PC-9 (cell line): ENCODE measurements at regions of chr2 and their contacts with region 1.

Region 1: DNA sequence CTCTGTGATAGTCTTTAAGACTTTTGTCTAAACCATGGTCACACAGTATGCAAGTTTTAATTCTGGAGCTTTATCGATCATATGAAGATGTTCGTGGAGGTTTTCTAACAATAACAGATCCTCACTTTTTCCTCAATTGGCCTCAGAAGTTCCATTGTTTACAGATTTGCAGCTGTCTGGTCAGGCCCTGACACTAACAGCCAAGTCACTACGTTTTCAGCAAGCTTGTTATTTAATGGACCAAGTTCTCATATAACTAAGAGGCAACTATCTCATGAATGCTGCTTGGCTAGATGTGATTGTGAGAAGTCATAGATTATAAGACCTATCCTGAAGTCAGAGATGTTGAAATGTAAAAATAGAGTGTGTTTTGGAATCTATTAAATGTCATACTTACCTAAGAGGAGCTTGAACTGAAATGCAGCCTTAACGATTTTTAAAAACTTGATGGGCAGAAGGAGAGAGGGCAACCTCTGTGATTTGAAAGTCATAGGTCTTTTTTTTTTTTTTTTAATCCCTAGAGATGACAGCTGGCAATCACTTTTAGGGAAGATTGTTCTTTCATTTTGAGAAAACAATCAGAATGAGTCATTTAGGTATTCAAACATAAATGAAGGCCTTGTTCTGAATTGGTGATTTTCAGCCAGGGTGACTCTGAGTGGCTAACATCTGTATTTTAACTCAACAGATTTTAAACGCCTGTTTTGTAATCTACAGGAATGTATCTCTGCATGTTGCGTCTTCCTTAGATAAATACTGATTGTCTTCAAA is 48.4 kb upstream of the NEMP2 start:
- DNase-seq: no peak
- H3K4me3 ChIP-seq: no peak overlapping the region
- H3K27ac ChIP-seq: no peak overlapping the region
- H3K4me1 ChIP-seq: peaks cover 6% of the 10 kb centered on the region; the same call in 1 of the 2 replicates
- H3K27me3 ChIP-seq: no peaks in the 10 kb centered on the region
- CTCF ChIP-seq: no peak

Region 2: DNA sequence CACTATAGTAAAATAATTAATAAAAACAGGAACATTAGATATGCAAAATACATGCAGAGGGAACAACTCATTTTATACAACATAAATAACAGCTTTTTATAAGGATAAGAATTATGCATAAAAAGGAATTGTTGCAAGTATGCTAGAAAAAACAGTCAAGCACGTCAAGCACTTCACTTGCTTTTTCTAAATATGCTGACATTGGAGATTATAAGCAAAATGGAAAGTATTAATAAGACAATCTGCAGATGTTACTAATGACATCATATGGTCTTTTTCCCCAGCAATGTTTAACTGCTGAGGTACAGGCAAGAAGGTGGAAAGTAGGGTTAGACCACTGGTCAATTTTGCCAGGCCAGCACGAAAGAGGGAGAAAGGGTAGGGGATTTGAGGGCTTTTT is 375.0 kb before region 1 on chr2:
- CTCF ChIA-PET with region 1: no interaction called
- POLR2A ChIA-PET with region 1: interaction called, 20 read pairs
- intact Hi-C with region 1: no loop called
- DNase-seq: no peak
- H3K4me3 ChIP-seq: no peak overlapping the region
- H3K27ac ChIP-seq: no peak overlapping the region
- H3K4me1 ChIP-seq: no peaks in the 10 kb centered on the region
- H3K27me3 ChIP-seq: no peaks in the 10 kb centered on the region
- CTCF ChIP-seq: no peak

Region 3: DNA sequence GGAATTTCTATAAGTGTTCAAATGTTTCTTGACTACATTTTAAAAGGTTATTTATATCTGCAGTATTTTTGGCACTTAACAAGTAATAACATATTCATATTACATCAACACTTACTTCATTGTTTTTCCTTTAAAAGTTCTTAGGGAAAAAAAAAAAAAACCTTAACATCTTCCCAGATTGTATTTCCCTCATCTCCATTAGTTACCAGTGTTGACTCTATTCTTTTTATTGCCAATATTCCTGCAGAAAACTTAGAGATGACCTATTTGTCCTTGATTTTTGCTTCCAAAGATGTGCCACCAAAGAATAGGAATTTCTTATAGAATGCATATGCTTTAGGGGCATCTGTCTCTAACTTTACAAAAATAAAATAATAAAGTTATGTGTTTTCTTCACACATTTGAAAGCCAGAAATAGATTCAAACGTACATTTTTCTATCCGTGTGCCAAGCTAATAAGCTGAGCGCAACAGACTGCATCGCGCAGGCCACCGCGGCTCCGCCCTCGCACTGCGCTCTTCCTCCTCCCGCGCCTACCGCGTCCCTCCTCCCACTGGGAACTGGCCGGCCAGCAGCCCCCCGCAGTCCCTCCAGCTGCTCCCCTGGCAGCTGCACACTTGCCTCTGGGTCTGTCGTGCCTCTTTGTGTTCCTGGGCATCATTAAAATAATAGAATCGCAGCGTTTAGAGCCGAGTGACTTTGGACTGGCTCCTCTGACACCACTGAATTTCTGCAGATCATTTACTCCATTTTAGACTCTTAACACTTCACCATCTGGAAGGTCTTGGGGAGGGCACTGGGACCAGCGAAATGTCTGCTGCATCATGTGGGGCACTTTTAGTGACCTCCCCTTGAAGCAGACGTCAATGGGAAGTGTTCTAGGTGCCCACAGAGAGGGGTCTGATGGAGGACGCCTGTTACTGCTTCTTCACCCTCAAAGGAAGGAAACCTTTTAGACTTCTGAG is 44.8 kb after region 1 on chr2:
- CTCF ChIA-PET with region 1: no interaction called
- POLR2A ChIA-PET with region 1: no interaction called
- intact Hi-C with region 1: no loop called
- DNase-seq: no peak
- H3K4me3 ChIP-seq: no peak overlapping the region
- H3K27ac ChIP-seq: no peak overlapping the region
- H3K4me1 ChIP-seq: no peaks in the 10 kb centered on the region
- H3K27me3 ChIP-seq: no peaks in the 10 kb centered on the region
- CTCF ChIP-seq: no peak

Region 4: GRCh38 chr2:191358318-191359025 is 775.6 kb after region 1 on chr2:
- CTCF ChIA-PET with region 1: no interaction called
- POLR2A ChIA-PET with region 1: interaction called, 22 read pairs
- intact Hi-C with region 1: no loop called
- DNase-seq: peak; percentile 15 to 77
- H3K4me3 ChIP-seq: no peak overlapping the region
- H3K27ac ChIP-seq: no peak overlapping the region
- H3K4me1 ChIP-seq: no peaks in the 10 kb centered on the region
- H3K27me3 ChIP-seq: no peaks in the 10 kb centered on the region
- CTCF ChIP-seq: no peak